HepG2 (cell line): ENCODE measurements at regions of chr13 and their contacts with region 1.

Region 1: GRCh38 chr13:76597868-76598267 is 288.3 kb downstream of the KCTD12 start:
- DNase-seq: no peak
- ATAC-seq: no peak
- H3K4me3 ChIP-seq: no peak overlapping the region
- H3K27ac ChIP-seq: no peak overlapping the region
- H3K4me1 ChIP-seq: no peaks in the 10 kb centered on the region
- H3K27me3 ChIP-seq: no peaks in the 10 kb centered on the region
- CTCF ChIP-seq: no peak
- EP300 ChIP-seq: no peak
- POLR2A ChIP-seq: no peak
- RAD21 ChIP-seq: no peak

Region 2: GRCh38 chr13:76579701-76580100 is 18.2 kb before region 1 on chr13:
- CTCF ChIA-PET with region 1: no interaction called
- POLR2A ChIA-PET with region 1: no interaction called
- in situ Hi-C with region 1: no loop called
- intact Hi-C with region 1: no loop called
- DNase-seq: no peak
- ATAC-seq: no peak
- H3K4me3 ChIP-seq: no peak overlapping the region
- H3K27ac ChIP-seq: no peak overlapping the region
- H3K4me1 ChIP-seq: no peaks in the 10 kb centered on the region
- H3K27me3 ChIP-seq: no peaks in the 10 kb centered on the region; a peak in 1 of 5 replicates
- CTCF ChIP-seq: no peak
- EP300 ChIP-seq: no peak
- POLR2A ChIP-seq: no peak
- RAD21 ChIP-seq: no peak

Region 3: DNA sequence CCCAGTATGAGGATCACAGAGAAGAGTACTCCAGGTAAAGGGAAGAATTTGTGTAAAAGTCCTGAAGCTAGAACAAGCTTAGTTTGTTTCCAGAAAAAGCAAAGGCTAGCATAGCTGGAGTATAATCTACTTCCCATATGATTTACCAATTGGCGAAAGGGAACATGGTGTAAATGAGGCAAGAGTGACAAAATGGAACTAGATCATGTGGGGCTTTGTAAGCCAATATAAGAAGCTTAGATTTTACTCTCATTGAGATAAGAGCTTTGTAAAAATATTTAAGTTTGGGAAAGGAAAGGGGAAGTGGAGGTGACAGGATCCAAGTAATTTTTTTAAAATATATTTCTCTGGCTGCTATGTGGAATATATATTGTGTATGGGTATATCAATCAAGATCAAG is 53.4 kb after region 1 on chr13:
- CTCF ChIA-PET with region 1: no interaction called
- POLR2A ChIA-PET with region 1: no interaction called
- in situ Hi-C with region 1: no loop called
- intact Hi-C with region 1: loop called (anchors 2 kb)
- DNase-seq: no peak
- ATAC-seq: no peak
- H3K4me3 ChIP-seq: no peak overlapping the region
- H3K27ac ChIP-seq: no peak overlapping the region
- H3K4me1 ChIP-seq: no peaks in the 10 kb centered on the region
- H3K27me3 ChIP-seq: no peaks in the 10 kb centered on the region
- CTCF ChIP-seq: no peak
- EP300 ChIP-seq: no peak
- POLR2A ChIP-seq: no peak
- RAD21 ChIP-seq: no peak